PC-3 (cell line): ENCODE measurements at regions of chr19 and their contacts with region 1.

Region 1: DNA sequence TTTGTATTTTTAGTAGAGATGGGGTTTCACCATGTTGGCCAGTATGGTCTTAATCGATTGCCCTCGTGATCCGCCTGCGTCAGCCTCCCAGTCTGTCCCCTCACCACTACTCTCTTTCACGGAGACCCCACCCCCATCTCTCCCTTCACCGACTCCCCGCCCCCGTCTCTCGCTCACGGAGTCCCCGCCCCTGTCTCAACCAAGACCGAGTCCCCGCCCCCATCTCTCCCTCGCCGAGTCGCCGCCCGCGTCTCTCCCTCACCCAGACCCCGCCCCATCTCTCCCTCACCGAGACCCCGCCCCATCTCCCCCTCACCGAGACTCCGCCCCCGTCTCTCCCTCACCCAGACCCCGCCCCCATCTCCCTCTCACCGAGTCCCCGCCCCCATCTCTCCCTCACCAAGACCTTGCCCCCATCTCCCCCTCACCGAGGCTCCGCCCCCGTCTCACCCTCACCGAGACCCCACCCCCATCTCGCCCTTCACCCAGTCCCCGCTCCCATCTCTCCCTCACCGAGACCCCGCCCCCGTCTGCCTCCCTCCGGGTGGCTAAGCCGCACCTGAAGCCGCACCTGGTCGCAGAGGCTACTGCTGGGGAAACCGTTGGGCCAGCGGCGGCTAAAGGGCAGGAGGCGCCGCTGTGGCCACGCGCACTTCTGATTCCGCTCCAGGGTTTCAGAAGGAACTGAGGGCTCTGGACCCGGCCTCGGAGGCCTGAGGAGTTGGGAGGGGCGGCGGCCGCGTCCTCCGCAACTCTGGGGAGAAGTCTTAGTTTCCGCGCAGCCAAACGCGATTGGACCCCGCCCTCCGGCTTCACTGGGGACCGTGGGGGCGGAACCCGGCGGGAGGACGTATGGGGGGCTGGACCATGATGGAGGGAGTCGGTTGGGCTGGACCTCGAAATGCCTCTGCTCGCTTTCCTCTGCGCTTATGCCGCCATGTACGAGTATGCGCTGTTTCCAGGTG is 17.1 kb upstream of the ZNF846 start:
- DNase-seq: peak; percentile 97
- ATAC-seq: peak; percentile 76
- H3K4me3 ChIP-seq: peak overlapping the region; percentile 73
- H3K27ac ChIP-seq: peak overlapping the region; percentile 75
- H3K4me1 ChIP-seq: peaks cover 23% of the 10 kb centered on the region
- H3K27me3 ChIP-seq: no peaks in the 10 kb centered on the region
- CTCF ChIP-seq: no peak

Region 2: GRCh38 chr19:9621156-9622037 is 164.3 kb before region 1 on chr19 and contains the start of gene ZNF561:
- CTCF ChIA-PET with region 1: no interaction called
- POLR2A ChIA-PET with region 1: no interaction called
- intact Hi-C with region 1: loop called (anchors 1 kb)
- DNase-seq: peak; percentile 79
- ATAC-seq: peak; percentile 83
- H3K4me3 ChIP-seq: peak within 1 kb of the TSS; percentile 86
- H3K27ac ChIP-seq: peak within 1 kb of the TSS; percentile 73
- H3K4me1 ChIP-seq: no peaks in the 10 kb centered on the region
- H3K27me3 ChIP-seq: no peaks in the 10 kb centered on the region
- CTCF ChIP-seq: no peak
- total RNA-seq, gene ZNF561: 20.1 and 23.3 TPM in 2 replicates

Region 3: DNA sequence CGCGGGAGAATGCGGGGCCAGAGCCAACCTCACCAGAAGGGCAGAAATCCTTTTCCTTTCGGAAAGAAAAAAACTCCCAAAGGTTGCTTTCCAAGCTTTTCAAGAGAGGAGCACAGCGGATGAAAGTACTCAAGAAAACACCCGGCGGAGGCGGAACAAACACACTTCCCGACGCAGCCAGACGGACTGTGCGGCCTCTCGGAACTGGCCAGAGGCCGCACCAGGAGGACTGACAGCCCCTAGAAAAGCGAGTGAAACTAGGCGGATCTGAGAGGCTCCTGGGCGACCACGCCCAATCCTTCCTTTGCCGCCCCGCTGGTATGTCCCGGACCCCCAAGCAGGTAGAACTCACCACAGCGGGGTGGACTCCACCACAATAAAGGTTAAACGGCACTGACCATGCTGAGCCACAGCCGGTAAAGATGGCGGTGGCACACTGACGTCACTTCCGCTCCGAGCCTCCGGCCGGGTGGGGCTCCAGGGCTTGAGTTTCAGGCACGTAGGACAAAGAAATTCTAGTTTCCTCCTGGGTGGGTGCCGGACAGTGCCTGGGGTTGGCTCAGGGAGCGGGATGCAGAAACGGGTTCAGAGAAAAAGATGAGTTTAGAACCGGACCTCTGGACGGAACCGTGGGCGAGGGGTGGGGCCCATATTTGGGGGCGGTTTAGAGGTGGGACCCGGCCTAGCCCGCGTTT is 110.8 kb before region 1 on chr19 and contains the start of gene ZNF562:
- CTCF ChIA-PET with region 1: no interaction called
- POLR2A ChIA-PET with region 1: no interaction called
- intact Hi-C with region 1: loop called (anchors 2 kb)
- DNase-seq: peak; percentile 83
- ATAC-seq: peak; percentile 91
- H3K4me3 ChIP-seq: peak within 1 kb of the TSS; percentile 78
- H3K27ac ChIP-seq: peak within 1 kb of the TSS; percentile 88
- H3K4me1 ChIP-seq: no peaks in the 10 kb centered on the region
- H3K27me3 ChIP-seq: no peaks in the 10 kb centered on the region
- CTCF ChIP-seq: no peak
- total RNA-seq, gene ZNF562: 21.0 and 26.0 TPM in 2 replicates

Region 4: GRCh38 chr19:9768175-9769112 is 17.2 kb before region 1 on chr19 and contains the start of gene ZNF846:
- CTCF ChIA-PET with region 1: no interaction called
- POLR2A ChIA-PET with region 1: no interaction called
- intact Hi-C with region 1: loop called (anchors 1 kb)
- DNase-seq: peak; percentile 99
- ATAC-seq: peak; percentile 99
- H3K4me3 ChIP-seq: peak within 1 kb of the TSS; percentile 93
- H3K27ac ChIP-seq: peak within 1 kb of the TSS; percentile 85
- H3K4me1 ChIP-seq: peaks cover 7% of the 10 kb centered on the region; the same call in 1 of the 2 replicates
- H3K27me3 ChIP-seq: no peaks in the 10 kb centered on the region
- CTCF ChIP-seq: no peak
- total RNA-seq, gene ZNF846: 10.9 and 15.7 TPM in 2 replicates

Region 5: GRCh38 chr19:9818734-9819589 is 33.3 kb after region 1 on chr19 and contains the start of gene FBXL12:
- CTCF ChIA-PET with region 1: no interaction called
- POLR2A ChIA-PET with region 1: no interaction called
- intact Hi-C with region 1: loop called (anchors 1 kb)
- DNase-seq: peak; percentile 100
- ATAC-seq: peak; percentile 85
- H3K4me3 ChIP-seq: peak within 1 kb of the TSS; percentile 82
- H3K27ac ChIP-seq: peak within 1 kb of the TSS; percentile 62
- H3K4me1 ChIP-seq: peaks cover 13% of the 10 kb centered on the region
- H3K27me3 ChIP-seq: no peaks in the 10 kb centered on the region
- CTCF ChIP-seq: no peak
- total RNA-seq, gene FBXL12: 31.4 and 37.6 TPM in 2 replicates

Region 6: GRCh38 chr19:9891609-9892373 is 106.1 kb after region 1 on chr19:
- CTCF ChIA-PET with region 1: no interaction called
- POLR2A ChIA-PET with region 1: no interaction called
- intact Hi-C with region 1: no loop called
- DNase-seq: no peak
- ATAC-seq: no peak
- H3K4me3 ChIP-seq: no peak overlapping the region
- H3K27ac ChIP-seq: no peak overlapping the region
- H3K4me1 ChIP-seq: no peaks in the 10 kb centered on the region
- H3K27me3 ChIP-seq: no peaks in the 10 kb centered on the region
- CTCF ChIP-seq: no peak